ENCODE measurements at regions of chr6 and their contacts with region 1.

Region 1: GRCh38 chr6:168956884-168957730 is 296.5 kb downstream of the THBS2 start:
- DNase-seq: peak; percentile 54
- ATAC-seq: peak; percentile 99
- H3K4me3 ChIP-seq: no peak overlapping the region
- H3K27ac ChIP-seq: no peak overlapping the region
- H3K4me1 ChIP-seq: no peaks in the 10 kb centered on the region
- H3K27me3 ChIP-seq: no peaks in the 10 kb centered on the region
- CTCF ChIP-seq: peak; percentile 82 to 88 (median 86)
- POLR2A ChIP-seq: no peak
- RAD21 ChIP-seq: peak; percentile 97

Region 2: DNA sequence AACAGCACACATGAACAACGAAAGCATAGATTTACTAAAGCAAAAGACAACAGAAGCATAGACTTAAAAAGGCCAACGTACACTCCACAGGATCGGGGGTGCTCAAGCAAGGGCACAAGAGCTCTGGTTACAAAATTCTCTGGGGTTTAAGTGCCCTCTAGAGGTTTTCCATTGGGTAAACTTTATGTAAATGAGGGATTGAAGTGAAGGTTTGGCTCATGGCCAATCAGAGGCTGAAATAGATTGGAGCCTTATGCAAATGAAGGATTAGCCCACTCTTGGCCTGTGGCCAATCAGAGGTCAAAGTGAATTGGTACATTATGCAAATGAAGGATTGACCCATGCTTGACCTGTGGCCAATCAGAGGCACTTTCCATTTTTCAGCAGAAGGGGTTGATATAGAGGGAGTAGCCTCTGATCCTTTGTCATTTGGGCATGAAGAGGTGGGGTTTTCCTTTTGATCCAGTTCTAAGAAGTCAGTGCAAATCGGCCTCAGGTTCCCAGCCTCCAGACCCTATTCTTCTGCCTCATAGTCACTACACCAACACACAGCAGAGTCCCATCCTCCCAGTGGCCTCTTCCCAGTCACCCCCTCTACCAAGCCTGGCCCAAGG is 51.6 kb after region 1 on chr6:
- CTCF ChIA-PET with region 1: no interaction called
- POLR2A ChIA-PET with region 1: no interaction called
- RAD21 ChIA-PET with region 1: no interaction called
- intact Hi-C with region 1: no loop called
- DNase-seq: no peak
- ATAC-seq: peak; percentile 40; the same call in 1 of the 2 replicates
- H3K4me3 ChIP-seq: no peak overlapping the region
- H3K27ac ChIP-seq: no peak overlapping the region
- H3K4me1 ChIP-seq: no peaks in the 10 kb centered on the region
- H3K27me3 ChIP-seq: no peaks in the 10 kb centered on the region
- CTCF ChIP-seq: no peak
- POLR2A ChIP-seq: no peak
- RAD21 ChIP-seq: peak; percentile 24; the same call in 1 of the 2 replicates

Region 3: DNA sequence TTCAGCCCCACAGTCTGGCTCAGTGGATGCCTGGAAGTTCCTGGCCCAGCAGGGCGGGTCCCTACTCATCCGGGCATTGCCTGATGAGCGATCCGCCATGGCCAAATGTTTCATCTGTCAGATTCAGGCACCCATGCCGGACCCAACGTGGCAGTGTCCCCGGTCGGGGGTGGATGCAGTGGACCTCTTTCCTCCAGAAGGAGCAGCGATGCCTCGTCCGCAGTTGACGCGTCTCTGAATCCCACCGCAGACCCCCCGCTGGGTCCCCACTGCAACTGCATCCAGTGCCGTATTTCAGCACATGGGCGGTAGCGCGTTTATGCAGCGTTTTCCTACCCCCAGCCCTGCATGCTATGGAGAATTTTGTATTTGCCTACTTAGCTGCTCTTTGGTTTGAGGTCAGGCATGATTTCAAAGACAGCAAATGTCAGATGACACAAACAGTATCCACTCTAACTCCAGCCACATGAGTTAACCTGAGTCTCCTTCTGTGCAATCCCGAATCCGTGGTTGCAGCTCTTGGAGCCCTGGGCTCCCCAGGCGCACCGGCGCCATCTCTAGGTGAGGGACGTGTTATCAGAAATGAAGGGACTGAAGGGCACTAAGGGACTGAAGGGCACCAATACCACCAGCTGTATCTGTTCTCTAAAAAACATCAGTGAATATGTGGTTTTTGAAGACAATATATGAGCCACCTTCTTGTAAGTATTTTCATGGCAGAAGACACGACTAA is 369.1 kb after region 1 on chr6:
- CTCF ChIA-PET with region 1: interaction called, 9 read pairs
- POLR2A ChIA-PET with region 1: no interaction called
- RAD21 ChIA-PET with region 1: no interaction called
- intact Hi-C with region 1: loop called (anchors 1 kb)
- DNase-seq: peak; percentile 44
- ATAC-seq: peak; percentile 92
- H3K4me3 ChIP-seq: no peak overlapping the region
- H3K27ac ChIP-seq: no peak overlapping the region
- H3K4me1 ChIP-seq: no peaks in the 10 kb centered on the region
- H3K27me3 ChIP-seq: no peaks in the 10 kb centered on the region
- CTCF ChIP-seq: peak; percentile 68 to 87 (median 77)
- POLR2A ChIP-seq: no peak
- RAD21 ChIP-seq: peak; percentile 95

Region 4: DNA sequence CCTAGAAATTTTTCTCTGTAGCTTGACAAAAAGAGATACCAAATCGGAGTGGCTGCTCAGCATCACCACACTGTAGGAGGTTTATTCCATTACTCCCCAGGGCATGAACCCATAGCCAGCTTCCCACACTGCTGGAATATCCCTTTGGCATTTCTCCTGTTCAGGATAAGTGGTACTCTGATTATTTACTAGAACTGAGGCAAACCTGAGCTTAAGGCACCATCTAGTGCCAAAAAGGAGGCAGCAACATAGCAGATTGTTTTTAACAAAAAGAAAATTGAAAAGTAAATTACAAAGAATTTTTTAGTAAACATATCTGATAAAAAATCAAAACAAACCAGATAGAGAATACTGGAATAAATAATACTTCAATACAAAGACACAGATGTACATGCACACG is 563.0 kb after region 1 on chr6:
- CTCF ChIA-PET with region 1: no interaction called
- POLR2A ChIA-PET with region 1: no interaction called
- RAD21 ChIA-PET with region 1: no interaction called
- intact Hi-C with region 1: loop called (anchors 1 kb)
- DNase-seq: no peak
- ATAC-seq: no peak
- H3K4me3 ChIP-seq: no peak overlapping the region
- H3K27ac ChIP-seq: no peak overlapping the region
- H3K4me1 ChIP-seq: no peaks in the 10 kb centered on the region
- H3K27me3 ChIP-seq: no peaks in the 10 kb centered on the region
- CTCF ChIP-seq: peak in 2 of 3 experiments; percentile 19 to 20; a peak in 1 of 6 replicates
- POLR2A ChIP-seq: no peak
- RAD21 ChIP-seq: peak; percentile 59

Region 5: DNA sequence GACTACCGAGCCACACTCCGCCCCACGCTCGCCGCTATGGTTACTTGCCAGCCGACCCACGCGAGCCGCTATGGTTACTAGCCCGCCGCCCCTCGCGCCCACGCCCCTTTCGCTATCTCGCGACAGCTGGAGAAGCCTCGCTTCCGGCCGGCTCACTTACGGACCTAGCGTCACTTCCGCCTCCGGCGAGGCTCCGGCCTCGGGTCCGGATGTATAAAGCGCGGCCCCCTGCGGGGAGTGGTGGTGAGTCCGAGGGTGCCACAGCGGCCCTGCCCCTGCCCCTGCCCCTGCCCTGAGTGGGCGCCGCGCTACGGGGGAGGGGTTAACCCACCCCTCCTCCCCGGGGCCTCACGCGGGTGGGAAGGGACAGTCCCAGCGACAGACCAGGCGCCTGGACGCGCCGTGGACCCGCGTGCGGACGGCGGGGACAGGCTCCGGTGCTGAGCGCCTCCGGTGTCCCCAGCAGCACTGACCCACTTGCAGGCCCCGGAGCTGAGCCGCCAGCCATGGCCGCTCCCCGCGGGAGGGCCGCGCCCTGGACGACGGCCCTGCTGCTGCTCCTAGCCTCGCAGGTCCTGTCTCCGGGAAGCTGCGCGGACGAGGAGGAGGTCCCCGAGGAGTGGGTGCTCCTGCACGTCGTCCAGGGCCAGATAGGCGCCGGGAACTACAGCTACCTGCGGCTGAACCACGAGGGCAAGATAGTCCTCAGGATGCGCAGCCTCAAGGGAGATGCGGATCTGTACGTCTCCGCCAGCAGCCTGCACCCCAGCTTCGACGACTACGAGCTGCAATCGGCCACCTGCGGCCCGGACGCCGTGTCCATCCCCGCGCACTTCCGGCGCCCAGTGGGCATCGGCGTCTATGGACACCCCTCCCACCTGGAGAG is 745.1 kb after region 1 on chr6 and contains the starts of genes C6orf120 and WDR27:
- CTCF ChIA-PET with region 1: no interaction called
- POLR2A ChIA-PET with region 1: no interaction called
- RAD21 ChIA-PET with region 1: no interaction called
- intact Hi-C with region 1: loop called (anchors 5 kb)
- DNase-seq: peak; percentile 91
- ATAC-seq: peak; percentile 90
- H3K4me3 ChIP-seq: peak within 1 kb of the TSS; percentile 94 to 98
- H3K27ac ChIP-seq: peak within 1 kb of the TSS; percentile 99
- H3K4me1 ChIP-seq: peaks cover 19 to 20% of the 10 kb centered on the region in 2 experiments
- H3K27me3 ChIP-seq: no peaks in the 10 kb centered on the region
- CTCF ChIP-seq: no peak
- POLR2A ChIP-seq: peak; percentile 52
- RAD21 ChIP-seq: no peak
- total RNA-seq, gene C6orf120: 20.6 TPM
- total RNA-seq, gene WDR27: 60.6 TPM

Region 6: DNA sequence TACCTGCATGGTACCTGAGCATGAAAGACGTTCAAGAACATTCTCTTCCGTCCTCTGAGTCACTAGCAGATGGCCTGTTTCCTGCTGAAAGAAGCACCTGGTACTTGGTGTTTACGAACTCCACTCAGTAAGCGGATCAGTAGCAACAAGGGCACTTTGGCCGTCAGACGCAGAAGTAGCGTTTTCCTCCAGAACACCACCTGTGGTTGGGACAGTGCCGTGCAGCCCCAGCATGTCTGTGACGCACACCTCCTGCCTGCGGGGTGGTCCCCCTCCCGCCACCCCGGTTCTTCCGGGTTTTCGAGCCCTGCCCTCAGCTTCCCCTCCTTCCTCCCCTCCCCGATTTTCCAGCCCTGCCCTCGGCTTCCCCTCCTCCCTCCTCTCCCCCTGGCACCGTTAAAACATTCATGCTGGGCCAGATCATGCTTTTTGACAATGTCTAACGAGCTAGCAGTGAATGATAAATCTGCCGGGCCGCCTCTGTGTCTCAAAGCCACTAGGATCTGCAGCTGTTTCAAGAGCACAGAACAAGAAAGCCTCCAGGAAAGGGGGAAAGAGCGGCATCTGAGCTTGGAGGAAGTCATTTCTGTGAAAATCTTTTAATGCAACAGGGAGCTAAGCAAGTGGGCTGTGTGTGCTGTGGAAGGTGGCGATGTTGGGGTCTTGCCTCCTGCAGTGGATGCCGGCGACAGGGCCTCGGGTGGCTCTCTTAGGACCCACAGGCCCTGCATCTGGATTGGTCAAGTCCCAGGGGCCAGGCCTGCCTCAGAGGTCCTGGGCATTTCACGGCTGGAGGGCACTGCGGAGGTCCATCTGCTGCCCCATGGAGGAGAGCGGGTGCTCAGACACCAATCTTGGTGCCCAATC is 1002.3 kb after region 1 on chr6:
- CTCF ChIA-PET with region 1: no interaction called
- POLR2A ChIA-PET with region 1: no interaction called
- RAD21 ChIA-PET with region 1: no interaction called
- intact Hi-C with region 1: loop called (anchors 10 kb)
- DNase-seq: no peak
- ATAC-seq: no peak
- H3K4me3 ChIP-seq: no peak overlapping the region
- H3K27ac ChIP-seq: no peak overlapping the region
- H3K4me1 ChIP-seq: no peaks in the 10 kb centered on the region
- H3K27me3 ChIP-seq: no peaks in the 10 kb centered on the region
- CTCF ChIP-seq: no peak
- POLR2A ChIP-seq: no peak
- RAD21 ChIP-seq: no peak

Region 7: DNA sequence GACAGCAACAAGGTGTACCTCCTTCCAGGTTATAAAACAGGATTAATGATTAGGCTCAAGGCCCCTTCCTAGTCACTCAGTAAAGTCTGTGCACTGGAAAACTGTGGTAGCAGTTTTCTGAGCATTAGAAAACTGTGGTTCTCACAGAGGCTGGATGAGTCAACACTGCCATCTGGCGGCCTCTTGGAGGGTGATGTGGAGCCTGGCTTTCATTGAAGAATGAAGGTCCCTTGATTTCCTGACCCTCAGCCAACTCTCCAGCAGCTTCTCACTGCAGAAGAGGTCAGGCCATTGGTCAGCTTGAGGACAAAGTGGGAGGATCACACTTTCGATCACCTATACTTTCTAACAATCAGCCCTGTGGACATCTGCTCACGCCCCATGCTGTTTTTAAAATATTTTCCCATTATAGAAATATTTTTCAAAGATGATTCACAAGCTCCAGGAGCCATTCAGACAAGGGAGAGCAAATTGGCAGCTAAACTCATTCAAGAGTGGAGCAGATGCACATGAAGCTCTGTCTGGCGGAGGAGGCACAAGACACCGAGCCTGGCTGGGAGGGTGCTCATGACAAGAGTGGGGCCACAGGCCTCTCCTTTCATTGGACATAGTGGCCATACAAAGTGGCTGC is 1572.8 kb after region 1 on chr6:
- CTCF ChIA-PET with region 1: interaction called, 6 read pairs
- POLR2A ChIA-PET with region 1: no interaction called
- RAD21 ChIA-PET with region 1: no interaction called
- intact Hi-C with region 1: loop called (anchors 1 kb)
- DNase-seq: peak; percentile 52
- ATAC-seq: peak; percentile 92
- H3K4me3 ChIP-seq: no peak overlapping the region
- H3K27ac ChIP-seq: no peak overlapping the region
- H3K4me1 ChIP-seq: no peaks in the 10 kb centered on the region
- H3K27me3 ChIP-seq: no peaks in the 10 kb centered on the region
- CTCF ChIP-seq: peak; percentile 84 to 92 (median 91)
- POLR2A ChIP-seq: no peak
- RAD21 ChIP-seq: peak; percentile 94